Dorsolateral prefrontal cortex (tissue), 120 donors: ENCODE measurements at regions of chr9 and their contacts with region 1.

Region 1: DNA sequence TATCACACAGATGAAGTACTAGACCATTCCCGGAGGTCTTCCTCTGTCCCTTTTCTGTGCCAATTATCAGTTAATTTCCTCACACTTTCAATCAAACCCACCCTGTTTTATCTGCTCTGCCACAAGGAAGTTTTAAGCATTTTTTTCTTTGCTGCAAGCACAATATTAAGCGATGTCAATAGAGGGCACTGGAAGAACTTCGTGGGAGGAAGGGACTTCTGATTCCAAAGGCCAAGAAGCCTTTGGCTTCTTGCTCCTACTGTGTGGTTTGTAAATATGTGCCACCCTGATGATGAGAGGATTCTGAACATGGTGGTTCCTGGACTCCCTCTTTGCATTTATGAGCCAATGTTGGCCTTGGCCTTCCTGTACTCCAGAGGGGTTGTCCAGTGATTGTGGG is 1712.5 kb upstream of the C9orf72 start:
- DNase-seq: no peak
- H3K4me3 ChIP-seq: no peak overlapping the region
- H3K27ac ChIP-seq: no peak overlapping the region
- H3K27me3 ChIP-seq: no peaks in the 10 kb centered on the region
- CTCF ChIP-seq: peak in 28 of 56 donors; percentile 7 to 53 (median 34)

Region 2: GRCh38 chr9:28539432-28540070 is 746.3 kb before region 1 on chr9:
- intact Hi-C with region 1: no loop called
- DNase-seq: no peak
- H3K4me3 ChIP-seq: no peak overlapping the region
- H3K27ac ChIP-seq: peak overlapping the region in 4 of 59 donors; percentile 6 to 57 (median 27)
- H3K27me3 ChIP-seq: no peaks in the 10 kb centered on the region
- CTCF ChIP-seq: no peak

Region 3: DNA sequence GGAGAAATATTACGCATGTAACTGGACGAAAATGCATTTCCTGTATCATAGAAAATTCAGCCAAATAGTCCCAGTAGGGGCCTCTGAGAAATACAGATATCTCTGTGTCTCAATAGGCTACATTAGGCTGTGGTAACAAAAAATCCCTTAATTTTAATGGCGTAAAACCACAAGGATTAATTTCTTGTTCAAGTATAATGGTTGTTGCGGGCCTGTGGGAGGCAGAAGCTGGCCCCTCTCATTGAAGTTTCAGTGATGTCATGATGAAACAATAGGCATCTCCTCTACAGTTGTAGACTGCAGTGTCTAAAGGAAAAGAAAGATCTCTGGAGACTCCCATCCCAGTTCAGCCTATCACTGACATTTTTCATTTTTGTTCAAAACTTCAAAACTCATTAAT is 87.0 kb before region 1 on chr9:
- intact Hi-C with region 1: no loop called
- DNase-seq: no peak
- H3K4me3 ChIP-seq: no peak overlapping the region
- H3K27ac ChIP-seq: no peak overlapping the region
- H3K27me3 ChIP-seq: no peaks in the 10 kb centered on the region
- CTCF ChIP-seq: no peak

Region 4: DNA sequence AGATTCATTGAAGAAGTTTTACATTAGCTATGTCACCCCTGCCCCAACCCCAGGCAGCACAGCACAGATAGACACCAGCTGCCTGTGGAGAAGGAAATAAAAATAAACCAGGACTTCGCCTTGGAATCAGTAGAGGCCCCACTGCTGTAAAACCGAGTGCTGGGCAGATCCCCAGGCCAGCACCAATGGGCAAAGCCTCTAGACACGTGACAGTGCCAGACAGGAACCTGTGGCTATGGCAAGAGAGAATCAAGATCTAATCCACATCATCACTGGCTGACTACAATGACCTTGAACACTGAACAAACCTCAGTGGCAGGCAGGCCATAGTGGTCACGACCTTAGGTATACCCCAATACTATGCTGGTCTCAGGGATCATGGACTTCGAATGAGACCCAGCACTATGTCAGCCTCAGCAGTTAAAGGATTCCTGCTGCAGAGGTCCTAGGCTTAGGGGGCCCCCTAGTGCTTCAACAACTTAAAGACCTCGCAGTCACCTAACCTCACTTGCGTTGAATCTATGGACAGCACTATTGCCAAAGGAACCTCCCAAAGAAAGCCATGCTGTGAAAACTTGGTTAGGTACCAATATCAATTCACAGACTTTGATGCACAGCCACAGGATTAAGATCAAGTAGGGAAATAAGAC is 406.1 kb after region 1 on chr9:
- intact Hi-C with region 1: loop called in 1 of 2 experiments (anchors 10 kb)
- DNase-seq: peak in 1 of 10 donors; percentile 14
- H3K4me3 ChIP-seq: no peak overlapping the region
- H3K27ac ChIP-seq: no peak overlapping the region
- H3K27me3 ChIP-seq: no peaks in the 10 kb centered on the region
- CTCF ChIP-seq: peak in 30 of 56 donors; percentile 7 to 58 (median 27)

Region 5: GRCh38 chr9:30120654-30121053 is 834.8 kb after region 1 on chr9:
- intact Hi-C with region 1: no loop called
- DNase-seq: no peak
- H3K4me3 ChIP-seq: no peak overlapping the region
- H3K27ac ChIP-seq: no peak overlapping the region
- H3K27me3 ChIP-seq: no peaks in the 10 kb centered on the region
- CTCF ChIP-seq: no peak